Ovary (tissue), 10 donors: ENCODE measurements at regions of chr5 and their contacts with region 1.

Region 1: GRCh38 chr5:4104831-4105597 is 509.4 kb downstream of the IRX1 start:
- DNase-seq: no peak
- H3K4me3 ChIP-seq: no peak overlapping the region
- H3K27ac ChIP-seq: no peak overlapping the region
- H3K4me1 ChIP-seq: no peaks in the 10 kb centered on the region
- H3K27me3 ChIP-seq: no peaks in the 10 kb centered on the region
- CTCF ChIP-seq: no peak
- EP300 ChIP-seq: no peak
- POLR2A ChIP-seq: no peak

Region 2: GRCh38 chr5:3650320-3650719 is 454.7 kb before region 1 on chr5:
- intact Hi-C with region 1: no loop called
- DNase-seq: no peak
- H3K4me3 ChIP-seq: no peak overlapping the region
- H3K27ac ChIP-seq: no peak overlapping the region
- H3K4me1 ChIP-seq: no peaks in the 10 kb centered on the region
- H3K27me3 ChIP-seq: no peaks in the 10 kb centered on the region
- CTCF ChIP-seq: no peak
- EP300 ChIP-seq: no peak
- POLR2A ChIP-seq: no peak

Region 3: GRCh38 chr5:4258170-4258569 is 153.2 kb after region 1 on chr5:
- intact Hi-C with region 1: no loop called
- DNase-seq: no peak
- H3K4me3 ChIP-seq: no peak overlapping the region
- H3K27ac ChIP-seq: no peak overlapping the region
- H3K4me1 ChIP-seq: no peaks in the 10 kb centered on the region
- H3K27me3 ChIP-seq: no peaks in the 10 kb centered on the region
- CTCF ChIP-seq: no peak
- EP300 ChIP-seq: no peak
- POLR2A ChIP-seq: no peak

Region 4: GRCh38 chr5:5217371-5217770 is 1112.4 kb after region 1 on chr5:
- intact Hi-C with region 1: loop called in 1 of 4 experiments (anchors 5 kb)
- DNase-seq: no peak
- H3K4me3 ChIP-seq: no peak overlapping the region
- H3K27ac ChIP-seq: no peak overlapping the region
- H3K4me1 ChIP-seq: no peaks in the 10 kb centered on the region
- H3K27me3 ChIP-seq: no peaks in the 10 kb centered on the region
- CTCF ChIP-seq: no peak
- EP300 ChIP-seq: no peak
- POLR2A ChIP-seq: no peak